ENCODE measurements at regions of chr7 and their contacts with region 1.

Region 1: DNA sequence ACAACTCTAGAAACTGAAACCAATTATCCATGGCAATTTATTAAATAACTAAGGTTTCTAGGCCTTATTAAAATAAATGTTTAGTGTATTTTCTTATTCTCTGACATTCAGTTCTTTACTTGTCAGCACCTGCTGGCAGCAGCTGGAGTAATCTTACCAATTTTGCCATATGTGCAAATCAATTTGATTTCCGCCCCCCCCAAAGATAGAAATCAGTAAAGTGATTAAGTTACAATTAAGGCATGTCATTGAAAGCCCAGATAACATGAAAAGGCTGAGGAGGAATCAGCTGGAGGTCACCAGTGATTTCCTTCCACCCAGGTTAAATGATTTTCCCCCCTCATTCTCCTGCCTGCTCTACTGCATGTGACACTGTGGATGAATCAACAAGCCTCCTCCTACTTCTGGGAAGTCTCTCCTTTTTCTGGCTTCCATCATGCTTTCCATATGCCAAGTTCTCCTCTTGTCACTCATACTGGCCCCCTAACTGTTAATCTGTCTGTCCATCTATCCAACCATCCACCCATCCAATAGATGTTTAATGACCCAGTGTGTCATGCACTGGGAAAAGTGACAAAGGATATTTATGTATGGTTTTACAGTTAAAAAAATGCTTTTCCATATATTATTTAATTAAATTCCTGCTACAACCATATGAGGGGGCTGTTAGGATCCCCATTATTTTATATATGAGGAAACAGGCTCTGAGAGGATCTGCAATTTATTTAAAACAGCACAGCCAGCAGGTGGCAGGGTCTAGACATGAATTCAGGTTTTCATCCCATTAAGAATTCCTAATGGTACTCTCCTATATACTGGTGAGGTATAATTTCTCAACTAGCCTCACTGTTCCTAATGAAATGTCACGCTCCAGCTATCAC is 116.5 kb downstream of the ATXN7L1 start:
- DNase-seq: peak; percentile 51
- H3K4me3 ChIP-seq: no peak overlapping the region
- H3K27ac ChIP-seq: peak overlapping the region in 1 of 4 donors; percentile 21
- H3K4me1 ChIP-seq: peaks cover 5 to 12% (median 6%) of the 10 kb centered on the region in 4 donors
- H3K27me3 ChIP-seq: no peaks in the 10 kb centered on the region
- CTCF ChIP-seq: peak; percentile 50 to 65 (median 61)
- EP300 ChIP-seq: no peak
- POLR2A ChIP-seq: no peak

Region 2: GRCh38 chr7:105602325-105603305 is 157.3 kb before region 1 on chr7:
- in situ Hi-C with region 1: no loop called
- intact Hi-C with region 1: no loop called
- DNase-seq: no peak
- H3K4me3 ChIP-seq: no peak overlapping the region
- H3K27ac ChIP-seq: no peak overlapping the region
- H3K4me1 ChIP-seq: peaks cover 0 to 3% (median 0%) of the 10 kb centered on the region in 4 donors
- H3K27me3 ChIP-seq: no peaks in the 10 kb centered on the region
- CTCF ChIP-seq: no peak
- EP300 ChIP-seq: no peak
- POLR2A ChIP-seq: no peak

Region 3: DNA sequence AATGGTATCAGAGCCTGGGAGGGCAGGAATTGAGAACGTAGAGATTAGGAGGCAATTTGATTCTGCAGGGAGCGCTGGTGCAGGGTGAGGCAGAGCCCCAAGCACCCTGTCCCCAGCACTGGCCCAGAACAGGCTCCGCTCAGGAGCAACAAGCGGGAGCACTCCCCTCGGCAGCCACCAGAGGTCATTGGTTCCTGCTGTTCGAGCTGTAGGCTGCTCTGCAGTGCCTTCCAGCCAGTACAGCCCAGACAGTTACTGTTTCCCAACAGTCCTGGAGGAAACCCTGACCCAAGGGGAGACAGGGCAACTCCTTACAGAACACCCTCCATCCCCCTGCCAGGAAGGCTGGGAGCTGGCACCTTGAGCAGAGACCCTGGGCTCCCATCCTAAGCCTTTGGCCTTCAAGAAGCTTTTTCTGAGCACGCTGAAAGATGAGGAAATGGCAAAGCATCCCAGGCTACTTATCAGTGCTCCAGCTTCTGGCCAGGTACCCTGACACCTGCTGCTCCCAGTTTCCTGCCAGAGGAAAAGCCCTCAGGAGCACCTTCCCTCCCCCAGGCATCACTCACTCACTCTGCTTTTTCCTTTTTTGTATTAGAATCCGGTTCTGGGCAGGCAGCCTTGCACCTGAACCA is 107.4 kb before region 1 on chr7:
- in situ Hi-C with region 1: no loop called
- intact Hi-C with region 1: loop called (anchors 10 kb)
- DNase-seq: peak; percentile 83
- H3K4me3 ChIP-seq: no peak overlapping the region
- H3K27ac ChIP-seq: no peak overlapping the region
- H3K4me1 ChIP-seq: peaks cover 7 to 16% (median 10%) of the 10 kb centered on the region in 4 donors
- H3K27me3 ChIP-seq: no peaks in the 10 kb centered on the region
- CTCF ChIP-seq: peak; percentile 78 to 86 (median 83)
- EP300 ChIP-seq: no peak
- POLR2A ChIP-seq: no peak

Region 4: GRCh38 chr7:105876091-105876963 is 116.4 kb after region 1 on chr7 and contains the start of gene ATXN7L1:
- in situ Hi-C with region 1: no loop called
- intact Hi-C with region 1: loop called (anchors 5 kb)
- DNase-seq: peak; percentile 96
- H3K4me3 ChIP-seq: peak within 1 kb of the TSS; percentile 77 to 96 (median 84)
- H3K27ac ChIP-seq: peak within 1 kb of the TSS; percentile 91 to 94 (median 92)
- H3K4me1 ChIP-seq: peaks cover 5 to 31% (median 22%) of the 10 kb centered on the region in 4 donors
- H3K27me3 ChIP-seq: no peaks in the 10 kb centered on the region
- CTCF ChIP-seq: peak in 4 of 5 experiments; percentile 6 to 62 (median 54)
- EP300 ChIP-seq: no peak
- POLR2A ChIP-seq: peak; percentile 79
- total RNA-seq, gene ATXN7L1: 12.3 to 28.8 (median 21.0) TPM

Region 5: DNA sequence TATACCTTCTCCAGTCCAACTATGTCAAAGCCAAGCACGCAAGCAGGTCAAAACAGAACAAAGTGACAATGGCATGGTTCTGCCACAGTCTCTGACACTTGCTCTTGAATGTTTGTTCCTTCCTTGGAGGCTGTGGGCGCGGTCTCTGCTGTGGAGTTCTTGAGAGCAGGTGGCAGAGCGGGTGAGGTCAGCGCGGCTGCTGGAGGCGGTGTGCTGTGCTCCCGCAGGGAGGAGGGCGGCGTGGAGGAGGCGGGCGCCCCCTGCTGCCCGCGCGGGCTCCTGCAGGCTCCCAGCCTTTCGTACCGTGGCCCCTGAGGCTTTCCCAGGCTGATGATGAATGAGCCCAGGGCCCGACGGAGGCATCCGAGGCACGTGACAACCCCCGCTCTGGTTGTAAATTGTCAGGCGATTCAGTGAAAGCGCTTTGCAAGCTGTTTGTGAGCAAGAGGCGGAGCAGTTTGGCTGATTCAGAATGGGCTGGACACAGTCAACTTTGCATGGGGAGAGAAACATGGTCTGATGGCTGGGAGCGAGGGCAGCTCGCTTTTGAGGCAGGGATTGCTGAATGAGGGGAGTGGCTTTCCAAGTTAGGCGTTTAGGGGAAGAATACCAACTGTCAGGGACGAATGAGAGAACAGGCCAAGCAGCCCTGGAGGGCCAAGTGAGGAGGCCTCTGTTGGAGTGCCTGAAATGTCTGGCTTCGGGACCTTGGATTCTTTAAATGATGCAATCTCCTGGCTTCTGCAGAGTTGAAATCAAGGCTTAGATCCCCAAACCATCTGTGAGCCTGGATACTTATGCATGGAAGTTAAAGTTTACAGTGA is 249.7 kb after region 1 on chr7:
- in situ Hi-C with region 1: loop called in 2 of 4 experiments (anchors 10 kb)
- intact Hi-C with region 1: no loop called
- DNase-seq: peak; percentile 90
- H3K4me3 ChIP-seq: no peak overlapping the region
- H3K27ac ChIP-seq: peak overlapping the region; percentile 40 to 61 (median 51)
- H3K4me1 ChIP-seq: peaks cover 4 to 19% (median 15%) of the 10 kb centered on the region in 4 donors
- H3K27me3 ChIP-seq: no peaks in the 10 kb centered on the region
- CTCF ChIP-seq: peak; percentile 95 to 98 (median 97)
- EP300 ChIP-seq: no peak
- POLR2A ChIP-seq: no peak

Region 6: DNA sequence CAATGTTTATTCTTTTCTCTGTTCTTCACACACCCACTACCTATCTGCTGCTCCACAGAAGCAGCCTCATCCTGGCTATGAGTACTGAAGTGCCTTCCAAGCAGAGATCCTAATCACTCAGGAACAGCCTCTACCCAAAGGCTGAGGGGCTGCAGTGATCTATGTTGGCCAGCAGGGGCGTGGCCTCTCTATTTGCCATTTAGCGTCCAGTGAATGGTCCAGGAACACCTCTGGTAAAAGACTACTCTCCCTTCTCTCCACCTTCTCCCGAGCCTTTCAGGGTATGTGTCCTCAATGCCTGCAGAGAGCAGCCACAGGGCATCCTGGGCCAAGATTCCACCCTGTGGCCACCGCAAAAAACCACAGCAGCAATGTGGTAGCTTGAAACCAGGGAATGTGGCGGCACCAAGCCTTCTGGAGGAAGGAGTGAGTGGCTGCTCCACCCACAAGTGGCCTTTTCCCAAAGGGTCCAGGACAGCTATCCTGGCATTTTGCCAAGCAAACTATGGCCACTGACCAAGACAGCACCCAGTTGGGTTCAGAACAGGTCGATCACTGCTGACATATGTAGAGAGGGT is 281.3 kb after region 1 on chr7:
- in situ Hi-C with region 1: loop called in 3 of 4 experiments (anchors 10 to 25 kb)
- intact Hi-C with region 1: loop called (anchors 5 kb)
- DNase-seq: no peak
- H3K4me3 ChIP-seq: no peak overlapping the region
- H3K27ac ChIP-seq: no peak overlapping the region
- H3K4me1 ChIP-seq: peaks cover 0 to 12% (median 6%) of the 10 kb centered on the region in 4 donors
- H3K27me3 ChIP-seq: no peaks in the 10 kb centered on the region
- CTCF ChIP-seq: peak; percentile 59 to 74 (median 71)
- EP300 ChIP-seq: no peak
- POLR2A ChIP-seq: no peak